ENCODE measurements at regions of chr11 and their contacts with region 1.

Region 1: DNA sequence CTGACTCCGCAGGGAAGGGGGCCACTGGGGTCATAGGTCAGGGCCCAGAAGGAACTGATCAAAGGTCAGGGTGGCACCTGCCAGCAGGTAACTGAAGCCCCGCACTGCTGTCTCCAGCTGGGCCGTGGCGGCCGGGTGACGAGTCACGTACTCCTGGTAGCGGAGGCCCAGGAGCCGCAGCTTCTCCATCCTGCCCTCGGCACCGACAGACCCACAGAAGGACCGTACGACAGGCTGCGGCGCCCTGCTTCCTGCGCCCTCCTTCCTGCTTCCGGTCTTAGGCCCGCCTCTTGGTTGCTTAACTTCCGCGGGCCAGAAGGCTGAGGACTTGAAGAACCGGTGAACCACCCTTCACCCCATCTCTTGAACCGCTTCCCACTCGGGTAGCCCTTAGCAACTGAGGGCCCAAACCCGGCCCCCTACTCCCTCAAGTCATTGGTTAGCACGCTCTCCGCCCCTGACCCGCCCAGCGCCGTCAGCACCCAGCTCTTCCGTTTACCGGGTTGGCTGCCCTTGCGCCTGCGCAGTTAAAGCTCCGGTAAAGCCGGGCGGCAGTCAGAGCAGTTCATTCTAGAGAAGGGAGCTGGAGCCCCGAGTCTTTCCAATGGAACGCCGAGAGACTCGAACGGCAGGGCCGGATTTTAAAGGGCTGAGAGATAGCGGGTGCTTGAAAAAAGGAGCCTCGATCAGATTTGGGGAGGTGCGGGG is at the start of gene PEX16:
- DNase-seq: peak; percentile 98
- H3K4me3 Mint-ChIP-seq: peak within 1 kb of the TSS; percentile 96
- H3K27ac Mint-ChIP-seq: peak within 1 kb of the TSS; percentile 96
- H3K4me1 Mint-ChIP-seq: peaks cover 26% of the 10 kb centered on the region
- H3K27me3 Mint-ChIP-seq: peaks cover 3% of the 10 kb centered on the region
- total RNA-seq, gene PEX16: 28.2 to 34.6 TPM

Region 2: GRCh38 chr11:45993531-45994001 is 75.8 kb after region 1 on chr11:
- CTCF ChIA-PET with region 1: no interaction called
- POLR2A ChIA-PET with region 1: no interaction called
- intact Hi-C with region 1: no loop called
- DNase-seq: no peak
- H3K4me3 Mint-ChIP-seq: no peak overlapping the region
- H3K27ac Mint-ChIP-seq: no peak overlapping the region
- H3K4me1 Mint-ChIP-seq: peaks cover 21% of the 10 kb centered on the region
- H3K27me3 Mint-ChIP-seq: no peaks in the 10 kb centered on the region

Region 3: DNA sequence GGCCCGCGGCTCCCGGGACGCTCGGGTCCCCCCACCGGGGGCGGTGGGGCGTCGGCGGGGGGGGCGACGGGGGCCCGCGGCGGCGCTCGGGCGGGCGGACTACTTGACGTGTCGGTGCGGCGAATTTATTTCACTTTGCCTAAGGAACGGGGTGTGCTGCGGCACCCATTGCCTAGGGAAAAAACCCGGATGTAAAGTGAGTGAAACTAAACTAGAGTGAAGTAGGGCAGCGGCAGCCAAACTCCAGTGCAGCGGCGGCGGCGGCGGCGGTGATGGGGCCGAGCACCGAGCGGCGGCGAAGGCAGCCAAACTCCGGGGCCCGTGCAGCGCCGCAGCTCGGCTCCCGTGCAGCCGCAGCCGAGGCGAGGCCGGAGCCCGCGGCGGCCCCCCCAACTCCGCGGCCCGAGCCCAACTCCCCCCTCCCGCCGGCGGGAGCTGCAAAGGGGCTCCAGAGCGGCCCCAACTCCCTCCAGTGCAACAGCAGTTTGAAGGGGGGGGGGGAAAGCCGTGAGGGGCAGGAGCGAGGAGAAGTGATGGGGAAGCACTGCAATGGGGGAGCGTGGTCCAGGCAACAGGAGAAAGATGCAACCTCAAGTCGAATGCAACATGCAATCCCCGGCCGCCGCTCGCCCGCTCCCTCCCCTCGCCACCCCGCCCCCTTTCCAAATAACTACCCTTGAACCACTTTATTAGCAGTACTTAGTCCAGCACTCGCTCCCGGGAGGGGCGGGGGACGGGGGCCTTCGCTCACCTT is 204.1 kb after region 1 on chr11:
- CTCF ChIA-PET with region 1: no interaction called
- POLR2A ChIA-PET with region 1: no interaction called
- intact Hi-C with region 1: loop called (anchors 5 kb)
- DNase-seq: peak; percentile 82
- H3K4me3 Mint-ChIP-seq: peak overlapping the region; percentile 77
- H3K27ac Mint-ChIP-seq: peak overlapping the region; percentile 85
- H3K4me1 Mint-ChIP-seq: peaks cover 39% of the 10 kb centered on the region
- H3K27me3 Mint-ChIP-seq: no peaks in the 10 kb centered on the region